Activated CD8-positive, alpha-beta T cell treated with anti-CD3 and anti-CD28 coated beads, Interleukin-2, amount 10 ng/mL, durations not matched to agents 7 days and 5 days (primary cell): ENCODE measurements at regions of chr4 and their contacts with region 1.

Region 1: DNA sequence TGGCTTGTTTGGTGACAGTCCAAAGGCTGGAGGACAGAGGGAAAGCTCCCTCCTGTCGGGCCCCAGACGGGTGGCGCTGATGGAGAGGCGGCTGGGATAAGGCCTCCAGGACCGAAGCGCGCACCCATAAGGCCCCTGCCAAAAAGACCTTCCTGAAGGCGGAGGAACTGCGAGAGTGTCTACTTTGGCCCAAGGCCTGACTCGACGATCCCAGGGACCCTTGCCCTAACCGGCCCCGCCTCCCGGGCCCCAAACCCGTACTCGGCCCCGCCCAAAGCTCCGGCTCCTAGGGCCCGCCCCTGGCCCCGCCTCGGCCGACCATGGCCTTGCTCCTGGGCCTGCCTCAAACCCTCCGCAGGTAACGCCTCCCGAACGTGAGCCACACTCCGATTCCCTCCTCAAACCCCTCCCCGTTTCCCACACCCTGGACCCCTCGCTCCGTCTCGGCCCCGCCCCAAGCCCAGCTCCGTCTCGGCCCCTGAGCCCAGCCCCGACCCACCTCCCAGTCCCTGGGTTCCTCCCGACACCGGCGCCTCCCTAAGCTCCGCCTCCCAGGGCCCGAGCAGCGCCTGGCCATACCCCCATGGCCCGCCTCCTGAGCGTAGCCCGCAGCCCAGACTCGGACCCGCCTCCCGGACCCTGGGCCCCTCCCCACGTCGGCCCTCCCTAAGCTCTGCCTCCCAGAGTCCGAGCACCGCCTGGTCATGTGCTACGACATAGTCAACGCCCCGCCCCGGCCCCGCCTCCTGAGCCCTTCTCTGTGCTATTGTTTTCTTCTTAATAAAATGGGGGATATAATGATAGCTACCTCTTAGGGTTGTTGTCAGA is 90.0 kb upstream of the DRD5 start:
- DNase-seq: peak; percentile 89
- ATAC-seq: peak; percentile 100
- H3K4me3 Mint-ChIP-seq: peak overlapping the region; percentile 76
- H3K27ac Mint-ChIP-seq: peak overlapping the region; percentile 74
- H3K4me1 Mint-ChIP-seq: peaks cover 18% of the 10 kb centered on the region
- H3K27me3 Mint-ChIP-seq: peaks cover 6% of the 10 kb centered on the region

Region 2: DNA sequence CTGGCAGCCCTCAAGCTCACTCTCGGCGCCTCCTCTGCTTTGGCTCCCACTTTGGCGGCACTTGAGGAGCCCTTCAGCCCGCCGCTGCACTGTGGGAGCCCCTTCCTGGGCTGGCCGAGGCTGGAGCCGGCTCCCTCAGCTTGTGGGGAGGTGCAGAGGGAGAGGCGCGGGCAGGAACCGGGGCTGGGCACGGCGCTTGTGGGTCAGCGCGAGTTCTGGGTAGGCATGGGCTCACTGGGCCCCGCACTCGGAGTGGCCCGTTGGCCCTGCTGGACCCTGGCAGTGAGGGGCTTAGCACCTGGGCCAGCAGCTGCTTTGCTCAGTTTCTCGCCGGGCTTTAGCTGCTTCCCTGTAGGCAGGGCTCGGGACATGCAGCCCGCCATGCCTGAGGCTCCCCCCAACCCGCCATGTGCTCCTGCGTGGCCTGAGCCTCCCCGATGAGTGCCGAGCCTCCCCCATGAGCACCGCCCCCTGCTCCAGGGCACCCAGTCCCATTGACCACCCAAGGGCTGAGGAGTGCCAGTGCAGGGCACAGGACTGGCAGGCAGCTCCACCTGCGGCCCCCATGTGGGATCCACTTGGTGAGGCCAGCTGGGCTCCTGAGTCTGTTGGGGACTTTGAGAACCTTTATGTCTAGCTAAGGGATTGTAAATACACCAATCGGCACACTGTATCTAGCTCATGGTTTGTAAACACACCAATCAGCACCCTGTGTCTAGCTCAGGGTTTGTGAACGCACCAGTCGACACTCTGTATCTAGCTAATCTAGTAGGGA is 11.6 kb before region 1 on chr4:
- CTCF ChIA-PET with region 1: no interaction called
- POLR2A ChIA-PET with region 1: no interaction called
- DNase-seq: no peak
- ATAC-seq: no peak
- H3K4me3 Mint-ChIP-seq: no peak overlapping the region
- H3K27ac Mint-ChIP-seq: no peak overlapping the region
- H3K4me1 Mint-ChIP-seq: no peaks in the 10 kb centered on the region
- H3K27me3 Mint-ChIP-seq: no peaks in the 10 kb centered on the region

Region 3: DNA sequence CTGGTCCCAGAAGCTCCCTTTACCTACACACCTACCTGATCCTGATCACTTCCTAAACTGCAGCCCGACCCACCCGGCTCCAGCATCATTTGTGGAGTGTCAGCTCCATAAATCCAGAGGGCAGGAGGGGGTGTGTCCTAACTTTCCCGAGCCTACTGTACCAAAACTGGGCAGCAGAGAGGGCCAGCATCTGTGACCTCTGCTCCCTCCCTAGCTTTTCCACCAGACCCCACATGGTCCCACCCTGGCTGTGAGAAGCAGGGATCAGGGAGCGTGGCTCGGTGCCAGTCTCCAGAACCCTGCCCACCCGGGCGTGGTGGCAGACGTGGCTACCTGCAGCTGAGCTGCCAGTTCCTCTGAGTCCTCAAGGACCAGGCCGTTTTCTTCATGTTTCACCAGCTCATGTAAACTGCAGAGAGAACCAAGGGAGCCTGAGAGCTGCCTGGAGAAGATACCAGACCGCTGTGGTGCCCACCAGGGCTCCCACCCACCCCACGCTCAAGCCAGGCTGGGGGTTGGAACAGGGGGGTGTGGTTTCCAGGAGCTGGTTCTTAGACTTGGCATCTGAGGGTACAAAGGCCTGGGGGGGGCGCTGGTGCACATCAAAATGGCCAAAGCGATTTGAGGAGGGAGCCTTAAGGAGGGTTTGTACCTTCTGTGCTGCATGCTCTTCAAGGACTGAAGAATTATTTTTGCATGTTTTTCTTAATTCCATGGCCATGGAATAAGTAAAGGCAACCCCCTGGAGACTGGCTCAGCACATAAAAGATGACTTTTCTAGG is 13.3 kb after region 1 on chr4:
- CTCF ChIA-PET with region 1: interaction called, 12 read pairs
- POLR2A ChIA-PET with region 1: no interaction called
- DNase-seq: no peak
- ATAC-seq: no peak
- H3K4me3 Mint-ChIP-seq: no peak overlapping the region
- H3K27ac Mint-ChIP-seq: no peak overlapping the region
- H3K4me1 Mint-ChIP-seq: peaks cover 28% of the 10 kb centered on the region
- H3K27me3 Mint-ChIP-seq: no peaks in the 10 kb centered on the region

Region 4: DNA sequence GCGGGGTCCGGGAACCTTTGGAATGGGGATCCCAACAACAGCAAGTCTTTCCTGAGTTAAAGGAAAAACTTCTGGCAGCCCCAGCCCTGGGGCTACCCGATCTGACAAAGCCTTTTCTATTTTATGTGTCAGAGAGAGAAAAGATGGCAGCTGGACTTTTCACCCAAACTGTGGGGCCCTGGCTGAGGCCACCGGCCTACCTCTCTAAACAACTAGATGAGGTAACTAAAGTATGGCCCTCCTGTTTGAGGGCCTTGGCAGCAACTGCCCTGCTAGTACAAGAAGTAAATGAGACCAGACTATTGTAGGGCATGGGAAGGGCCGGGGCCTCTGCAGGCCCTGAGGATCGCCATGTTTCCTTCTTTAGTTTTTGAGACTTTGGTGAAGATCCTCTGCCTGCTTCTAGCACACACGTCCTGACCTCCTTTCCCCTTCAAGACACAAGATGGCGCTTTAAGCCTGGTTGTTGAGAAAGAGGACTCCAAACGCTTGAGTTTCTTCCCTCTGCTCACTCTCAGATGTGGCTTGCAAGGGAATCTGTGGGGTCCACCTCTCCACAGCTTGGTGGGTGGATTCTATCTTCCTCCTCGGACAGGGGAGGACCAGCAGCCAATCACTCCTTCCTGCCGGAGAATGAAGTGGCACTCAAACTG is 71.5 kb after region 1 on chr4:
- CTCF ChIA-PET with region 1: no interaction called
- POLR2A ChIA-PET with region 1: no interaction called
- DNase-seq: peak; percentile 69
- ATAC-seq: peak; percentile 39
- H3K4me3 Mint-ChIP-seq: no peak overlapping the region
- H3K27ac Mint-ChIP-seq: no peak overlapping the region
- H3K4me1 Mint-ChIP-seq: no peaks in the 10 kb centered on the region
- H3K27me3 Mint-ChIP-seq: peaks cover 8% of the 10 kb centered on the region